ENCODE measurements at regions of chr11 and their contacts with region 1.

Region 1: GRCh38 chr11:65859200-65859811 is 927 bp upstream of the MUS81 start:
- DNase-seq: peak; percentile 96 to 99
- H3K4me3 ChIP-seq: peak overlapping the region; percentile 96
- H3K27ac ChIP-seq: peak overlapping the region; percentile 79
- H3K4me1 ChIP-seq: peaks cover 21% of the 10 kb centered on the region
- H3K27me3 ChIP-seq: no peaks in the 10 kb centered on the region
- CTCF ChIP-seq: peak; percentile 38; the same call in 1 of the 2 replicates

Region 2: DNA sequence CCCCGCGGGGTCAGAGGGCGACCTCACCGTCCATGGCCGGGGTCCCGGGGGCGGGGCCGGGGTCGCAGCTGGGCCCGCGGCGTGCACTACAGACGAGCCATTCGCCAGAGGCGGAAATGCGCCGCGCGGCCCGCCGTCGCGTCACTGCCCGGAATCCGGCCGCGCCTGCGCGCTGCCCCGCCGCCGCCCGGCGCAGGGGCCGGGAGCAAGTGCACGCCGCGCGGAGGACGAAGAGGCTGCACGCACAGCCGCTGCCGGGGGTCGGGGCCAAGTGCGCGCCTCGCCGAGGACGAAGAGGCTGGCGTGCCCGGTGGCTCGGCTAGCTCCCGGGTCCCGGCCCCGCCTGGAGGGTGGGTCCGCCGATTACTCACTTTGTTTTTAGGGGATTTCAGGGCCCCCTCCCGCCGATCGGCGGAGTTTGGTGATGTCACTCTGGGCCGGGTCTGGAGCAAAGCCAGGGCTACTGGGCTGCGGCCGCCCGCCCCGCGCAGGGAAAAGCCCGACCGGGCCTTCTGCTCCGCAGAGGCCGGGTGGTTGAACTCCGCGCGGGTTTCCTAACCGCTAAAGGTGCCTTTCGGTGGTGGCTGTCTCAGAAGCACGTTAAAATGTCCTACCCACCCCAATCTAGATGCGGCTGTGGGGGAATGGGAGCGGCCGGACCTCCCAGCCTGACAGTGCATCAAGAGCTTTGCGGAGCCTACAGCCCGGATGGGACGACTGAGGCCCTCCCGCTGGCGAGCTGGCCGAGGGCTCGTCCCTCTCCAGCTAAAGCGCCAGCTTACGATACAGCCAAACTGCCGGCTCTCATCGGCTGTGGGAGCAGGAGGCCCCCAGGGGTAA is 196.3 kb before region 1 on chr11 and contains the start of gene RELA:
- CTCF ChIA-PET with region 1: no interaction called
- POLR2A ChIA-PET with region 1: interaction called, 21 read pairs
- intact Hi-C with region 1: loop called (anchors 1 kb)
- DNase-seq: peak; percentile 76 to 98
- H3K4me3 ChIP-seq: peak within 1 kb of the TSS; percentile 99
- H3K27ac ChIP-seq: peak within 1 kb of the TSS; percentile 80
- H3K4me1 ChIP-seq: peaks cover 20% of the 10 kb centered on the region
- H3K27me3 ChIP-seq: no peaks in the 10 kb centered on the region
- CTCF ChIP-seq: no peak
- total RNA-seq, gene RELA: 59.5 and 86.8 TPM in 2 replicates

Region 3: DNA sequence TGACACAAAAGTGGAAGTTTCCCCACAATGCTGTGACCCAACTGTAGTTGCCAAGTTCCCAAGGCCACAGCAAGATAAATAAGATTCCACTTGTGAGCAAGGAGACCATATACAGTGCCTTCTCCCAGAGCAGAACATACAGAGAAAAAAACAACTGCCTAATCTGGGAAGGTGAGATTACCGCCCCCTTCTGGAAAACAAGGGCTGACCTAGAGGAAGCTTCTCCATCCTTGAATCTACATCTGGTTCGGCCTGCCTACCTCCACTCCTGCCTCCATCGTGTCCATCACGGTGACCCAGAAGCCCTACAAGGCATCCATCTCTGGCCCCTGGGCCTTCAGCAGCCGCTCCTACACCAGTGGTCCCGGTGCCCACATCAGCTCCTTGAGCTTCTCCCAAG is 132.6 kb before region 1 on chr11:
- CTCF ChIA-PET with region 1: interaction called, 21 read pairs
- POLR2A ChIA-PET with region 1: no interaction called
- intact Hi-C with region 1: no loop called
- DNase-seq: peak in 1 of 2 experiments; percentile 31
- H3K4me3 ChIP-seq: no peak overlapping the region
- H3K27ac ChIP-seq: no peak overlapping the region
- H3K4me1 ChIP-seq: no peaks in the 10 kb centered on the region
- H3K27me3 ChIP-seq: peaks cover 6% of the 10 kb centered on the region; the same call in 1 of the 2 replicates
- CTCF ChIP-seq: no peak

Region 4: GRCh38 chr11:65786786-65787636 is 72.3 kb before region 1 on chr11 and contains the start of gene OVOL1:
- CTCF ChIA-PET with region 1: interaction called, 3 read pairs
- POLR2A ChIA-PET with region 1: interaction called, 6 read pairs
- intact Hi-C with region 1: loop called (anchors 2 kb)
- DNase-seq: peak; percentile 87 to 93
- H3K4me3 ChIP-seq: peak within 1 kb of the TSS; percentile 93
- H3K27ac ChIP-seq: peak within 1 kb of the TSS; percentile 68
- H3K4me1 ChIP-seq: peaks cover 47% of the 10 kb centered on the region
- H3K27me3 ChIP-seq: no peaks in the 10 kb centered on the region
- CTCF ChIP-seq: no peak
- total RNA-seq, gene OVOL1: 10.2 and 10.5 TPM in 2 replicates

Region 5: GRCh38 chr11:65911682-65912568 is 52.6 kb after region 1 on chr11:
- CTCF ChIA-PET with region 1: no interaction called
- POLR2A ChIA-PET with region 1: interaction called, 10 read pairs
- intact Hi-C with region 1: loop called (anchors 2 kb)
- DNase-seq: peak; percentile 63 to 70
- H3K4me3 ChIP-seq: no peak overlapping the region
- H3K27ac ChIP-seq: peak overlapping the region; percentile 67
- H3K4me1 ChIP-seq: peaks cover 77% of the 10 kb centered on the region
- H3K27me3 ChIP-seq: no peaks in the 10 kb centered on the region
- CTCF ChIP-seq: no peak; the same call in 1 of the 2 replicates

Region 6: GRCh38 chr11:65919146-65920033 is 60.1 kb after region 1 on chr11 and contains the start of gene DRAP1:
- CTCF ChIA-PET with region 1: no interaction called
- POLR2A ChIA-PET with region 1: interaction called, 5 read pairs
- intact Hi-C with region 1: loop called (anchors 2 kb)
- DNase-seq: peak; percentile 91 to 99
- H3K4me3 ChIP-seq: peak within 1 kb of the TSS; percentile 89
- H3K27ac ChIP-seq: peak within 1 kb of the TSS; percentile 90
- H3K4me1 ChIP-seq: peaks cover 48% of the 10 kb centered on the region
- H3K27me3 ChIP-seq: no peaks in the 10 kb centered on the region
- CTCF ChIP-seq: no peak
- total RNA-seq, gene DRAP1: 196 and 220 TPM in 2 replicates

Region 7: GRCh38 chr11:65961232-65961901 is 102.1 kb after region 1 on chr11 and contains the start of gene SART1:
- CTCF ChIA-PET with region 1: no interaction called
- POLR2A ChIA-PET with region 1: no interaction called
- intact Hi-C with region 1: no loop called
- DNase-seq: peak; percentile 94 to 97
- H3K4me3 ChIP-seq: peak within 1 kb of the TSS; percentile 71
- H3K27ac ChIP-seq: peak within 1 kb of the TSS; percentile 63
- H3K4me1 ChIP-seq: peaks cover 13% of the 10 kb centered on the region
- H3K27me3 ChIP-seq: no peaks in the 10 kb centered on the region
- CTCF ChIP-seq: no peak
- total RNA-seq, gene SART1: 74.6 and 78.8 TPM in 2 replicates

Region 8: GRCh38 chr11:66011239-66011784 is 152.0 kb after region 1 on chr11:
- CTCF ChIA-PET with region 1: no interaction called
- POLR2A ChIA-PET with region 1: interaction called, 14 read pairs
- intact Hi-C with region 1: no loop called
- DNase-seq: peak; percentile 94 to 100
- H3K4me3 ChIP-seq: peak overlapping the region; percentile 52
- H3K27ac ChIP-seq: peak overlapping the region; percentile 66
- H3K4me1 ChIP-seq: peaks cover 64% of the 10 kb centered on the region
- H3K27me3 ChIP-seq: no peaks in the 10 kb centered on the region
- CTCF ChIP-seq: no peak

Measured in PC-9 (cell line).